ENCODE measurements at regions of chr4 and their contacts with region 1.

Region 1: GRCh38 chr4:165131247-165131832 is 18.7 kb upstream of the TMEM192 start:
- DNase-seq: no peak
- H3K4me3 ChIP-seq: no peak overlapping the region
- CTCF ChIP-seq: peak; percentile 78

Region 2: GRCh38 chr4:164926301-164926700 is 205.0 kb before region 1 on chr4:
- CTCF ChIA-PET with region 1: no interaction called
- POLR2A ChIA-PET with region 1: no interaction called
- DNase-seq: no peak
- H3K4me3 ChIP-seq: no peak overlapping the region
- CTCF ChIP-seq: no peak

Region 3: GRCh38 chr4:165112368-165113139 is 18.8 kb before region 1 on chr4 and contains the start of gene TMEM192:
- CTCF ChIA-PET with region 1: interaction called, 47 read pairs
- POLR2A ChIA-PET with region 1: no interaction called
- DNase-seq: no peak
- H3K4me3 ChIP-seq: peak within 1 kb of the TSS; percentile 89
- CTCF ChIP-seq: peak; percentile 55

Region 4: GRCh38 chr4:165118256-165118909 is 13.0 kb before region 1 on chr4:
- CTCF ChIA-PET with region 1: interaction called, 47 read pairs
- POLR2A ChIA-PET with region 1: no interaction called
- DNase-seq: no peak
- H3K4me3 ChIP-seq: no peak overlapping the region
- CTCF ChIP-seq: no peak

Region 5: GRCh38 chr4:165343353-165344191 is 212.2 kb after region 1 on chr4:
- CTCF ChIA-PET with region 1: interaction called, 117 read pairs
- POLR2A ChIA-PET with region 1: no interaction called
- DNase-seq: no peak
- H3K4me3 ChIP-seq: no peak overlapping the region
- CTCF ChIP-seq: peak; percentile 23

Region 6: DNA sequence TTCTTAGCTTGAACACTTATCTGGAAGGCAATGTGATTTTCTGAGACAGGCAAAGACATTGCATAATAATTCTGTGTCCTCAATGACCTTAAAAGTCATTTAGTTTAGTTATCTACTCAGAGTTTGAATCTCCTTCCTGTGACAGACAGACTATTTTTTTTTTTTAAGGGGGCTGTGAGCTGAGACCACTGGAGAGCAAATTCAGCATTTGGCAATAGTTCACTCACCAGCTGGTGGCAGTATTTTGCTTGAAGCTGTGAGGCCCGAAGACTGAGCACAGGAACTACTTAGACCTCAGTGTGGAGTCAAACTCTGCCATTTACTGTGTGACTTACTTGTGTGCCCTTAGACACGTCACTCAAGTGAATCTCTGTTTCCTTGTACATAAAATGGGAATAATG is 224.6 kb after region 1 on chr4:
- CTCF ChIA-PET with region 1: interaction called, 14 read pairs
- POLR2A ChIA-PET with region 1: no interaction called
- DNase-seq: no peak
- H3K4me3 ChIP-seq: no peak overlapping the region
- CTCF ChIP-seq: peak; percentile 32

Region 7: GRCh38 chr4:165464813-165465381 is 333.6 kb after region 1 on chr4:
- CTCF ChIA-PET with region 1: interaction called, 70 read pairs
- POLR2A ChIA-PET with region 1: no interaction called
- DNase-seq: no peak
- H3K4me3 ChIP-seq: no peak overlapping the region
- CTCF ChIP-seq: peak; percentile 51

Region 8: GRCh38 chr4:165612936-165613335 is 481.6 kb after region 1 on chr4:
- CTCF ChIA-PET with region 1: no interaction called
- POLR2A ChIA-PET with region 1: no interaction called
- DNase-seq: no peak
- H3K4me3 ChIP-seq: no peak overlapping the region
- CTCF ChIP-seq: no peak

Region 9: GRCh38 chr4:165651901-165652300 is 520.6 kb after region 1 on chr4:
- CTCF ChIA-PET with region 1: no interaction called
- POLR2A ChIA-PET with region 1: no interaction called
- DNase-seq: no peak
- H3K4me3 ChIP-seq: no peak overlapping the region
- CTCF ChIP-seq: no peak